ENCODE measurements at regions of chr7 and their contacts with region 1.

Region 1: GRCh38 chr7:151080522-151081169 is at the start of gene FASTK:
- DNase-seq: peak; percentile 90
- ATAC-seq: peak; percentile 82
- H3K4me3 ChIP-seq: peak within 1 kb of the TSS; percentile 58 to 92 (median 89)
- H3K4me3 Mint-ChIP-seq: peak within 1 kb of the TSS; percentile 87
- H3K27ac ChIP-seq: peak within 1 kb of the TSS; percentile 68 to 92
- H3K27ac Mint-ChIP-seq: peak within 1 kb of the TSS; percentile 88
- H3K4me1 ChIP-seq: peaks cover 42 to 52% of the 10 kb centered on the region in 2 donors
- H3K4me1 Mint-ChIP-seq: peaks cover 52% of the 10 kb centered on the region
- H3K27me3 ChIP-seq: peaks cover 0 to 20% (median 8%) of the 10 kb centered on the region in 4 experiments
- H3K27me3 Mint-ChIP-seq: peaks cover 11% of the 10 kb centered on the region
- CTCF ChIP-seq: no peak
- total RNA-seq, gene FASTK: 119 and 120 TPM in 2 replicates

Region 2: GRCh38 chr7:149771721-149772240 is 1308.9 kb before region 1 on chr7:
- CTCF ChIA-PET with region 1: no interaction called
- POLR2A ChIA-PET with region 1: no interaction called
- intact Hi-C with region 1: loop called (anchors 5 kb)
- DNase-seq: peak; percentile 89
- ATAC-seq: peak; percentile 97
- H3K4me3 ChIP-seq: peak overlapping the region in 4 of 5 experiments; percentile 53 to 74 (median 64)
- H3K4me3 Mint-ChIP-seq: peak overlapping the region; percentile 78
- H3K27ac ChIP-seq: no peak overlapping the region
- H3K27ac Mint-ChIP-seq: no peak overlapping the region
- H3K4me1 ChIP-seq: peaks cover 7 to 19% of the 10 kb centered on the region in 2 donors
- H3K4me1 Mint-ChIP-seq: peaks cover 9% of the 10 kb centered on the region
- H3K27me3 ChIP-seq: peaks cover 0 to 19% (median 1%) of the 10 kb centered on the region in 4 experiments
- H3K27me3 Mint-ChIP-seq: peaks cover 10% of the 10 kb centered on the region
- CTCF ChIP-seq: no peak

Region 3: DNA sequence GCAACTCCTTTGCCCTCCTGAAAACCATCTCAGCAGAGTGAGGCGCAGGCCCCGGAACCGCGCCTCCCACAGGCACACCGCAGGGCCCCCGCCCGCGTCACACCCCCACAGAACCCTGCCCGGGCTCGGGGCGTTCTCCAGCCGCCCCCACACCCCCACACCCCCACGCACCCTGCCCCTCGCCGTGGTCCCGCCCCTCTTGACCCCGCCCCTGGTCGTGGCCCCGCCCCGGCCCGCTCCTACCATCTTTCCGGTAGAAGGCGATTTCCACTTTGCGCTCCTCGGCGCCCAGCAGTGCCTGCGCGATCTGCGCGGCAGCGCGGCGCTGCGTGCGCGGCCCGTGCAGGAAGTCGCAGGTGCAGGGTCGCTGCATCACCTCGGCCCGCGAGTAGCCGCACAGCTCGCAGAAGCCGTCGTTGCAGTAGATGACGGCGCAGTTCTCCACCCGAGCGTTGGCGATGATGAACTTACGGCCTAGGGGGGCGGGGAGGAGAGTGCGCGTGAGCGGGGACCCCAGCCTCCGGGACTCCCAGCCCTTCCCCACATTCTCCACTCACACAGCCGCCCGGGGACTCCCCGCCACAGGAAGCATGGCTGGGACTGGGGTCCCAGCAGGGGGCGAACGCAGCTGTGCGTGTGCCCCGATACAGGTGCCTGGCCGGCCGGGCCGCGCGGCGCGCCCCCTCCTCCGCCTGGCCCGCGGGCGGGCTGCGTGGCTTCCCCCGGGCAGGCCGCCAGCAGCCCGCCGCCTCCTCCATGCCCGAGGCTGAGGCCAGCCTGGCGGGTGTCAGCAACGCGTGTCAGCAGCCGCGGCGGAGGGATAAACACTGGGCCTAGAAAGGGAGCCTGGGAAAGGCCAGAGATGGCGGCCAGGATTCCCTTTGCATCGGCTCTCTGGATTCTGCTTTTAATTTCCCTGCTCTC is 105.9 kb before region 1 on chr7:
- CTCF ChIA-PET with region 1: no interaction called
- POLR2A ChIA-PET with region 1: no interaction called
- intact Hi-C with region 1: loop called (anchors 5 kb)
- DNase-seq: peak; percentile 81
- ATAC-seq: peak; percentile 71
- H3K4me3 ChIP-seq: peak overlapping the region; percentile 21 to 74 (median 60)
- H3K4me3 Mint-ChIP-seq: peak overlapping the region; percentile 94
- H3K27ac ChIP-seq: peak overlapping the region in 1 of 2 donors; percentile 64
- H3K27ac Mint-ChIP-seq: peak overlapping the region; percentile 87
- H3K4me1 ChIP-seq: peaks cover 37 to 42% of the 10 kb centered on the region in 2 donors
- H3K4me1 Mint-ChIP-seq: peaks cover 43% of the 10 kb centered on the region
- H3K27me3 ChIP-seq: peaks cover 0 to 41% (median 28%) of the 10 kb centered on the region in 4 experiments
- H3K27me3 Mint-ChIP-seq: peaks cover 19% of the 10 kb centered on the region
- CTCF ChIP-seq: peak; percentile 33

Region 4: DNA sequence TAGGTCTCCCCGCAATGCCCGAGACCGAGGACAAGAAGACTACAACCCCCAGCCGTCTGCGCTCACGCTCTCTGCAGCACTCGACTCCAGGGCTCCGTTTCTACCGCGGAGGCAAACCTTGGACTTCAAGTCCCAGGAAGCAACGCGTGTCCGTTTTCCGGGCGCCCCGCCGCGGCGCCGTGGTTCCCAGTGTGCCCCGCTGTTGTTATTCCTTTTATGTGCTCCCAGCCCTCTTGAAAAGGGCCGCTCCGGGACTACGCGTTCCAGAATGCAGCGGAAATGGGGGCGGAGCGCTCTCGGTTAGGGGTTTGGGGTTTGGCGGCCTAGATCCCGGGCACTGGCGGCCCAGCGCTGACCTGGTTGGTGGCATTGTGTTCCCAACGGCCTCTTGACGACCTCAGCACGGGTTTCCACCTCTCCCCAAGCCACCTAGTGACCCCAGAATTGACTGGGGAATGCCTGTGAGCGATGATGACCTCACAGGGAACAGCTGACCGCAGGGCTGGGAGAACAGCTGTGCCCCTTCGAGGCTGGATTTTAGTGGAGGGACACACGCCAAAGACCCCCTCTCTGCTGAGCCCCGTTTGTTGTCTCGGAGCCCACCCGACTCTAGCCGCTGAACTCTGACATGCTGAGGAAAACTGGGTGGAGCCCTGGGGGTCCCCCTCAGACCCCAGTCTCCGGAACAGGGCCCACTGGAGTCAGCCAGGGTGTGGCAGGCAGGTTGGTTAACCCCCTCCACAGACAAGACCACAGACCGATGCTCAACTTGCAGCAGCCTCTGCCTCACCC is 22.5 kb before region 1 on chr7:
- CTCF ChIA-PET with region 1: interaction called, 6 read pairs
- POLR2A ChIA-PET with region 1: interaction called, 3 read pairs
- intact Hi-C with region 1: loop called (anchors 1 kb)
- DNase-seq: peak; percentile 98
- ATAC-seq: peak; percentile 92
- H3K4me3 ChIP-seq: peak overlapping the region; percentile 67 to 90 (median 73)
- H3K4me3 Mint-ChIP-seq: peak overlapping the region; percentile 96
- H3K27ac ChIP-seq: peak overlapping the region; percentile 79 to 82
- H3K27ac Mint-ChIP-seq: peak overlapping the region; percentile 94
- H3K4me1 ChIP-seq: peaks cover 23 to 40% of the 10 kb centered on the region in 2 donors
- H3K4me1 Mint-ChIP-seq: peaks cover 36% of the 10 kb centered on the region
- H3K27me3 ChIP-seq: no peaks in the 10 kb centered on the region
- H3K27me3 Mint-ChIP-seq: no peaks in the 10 kb centered on the region
- CTCF ChIP-seq: no peak

Region 5: DNA sequence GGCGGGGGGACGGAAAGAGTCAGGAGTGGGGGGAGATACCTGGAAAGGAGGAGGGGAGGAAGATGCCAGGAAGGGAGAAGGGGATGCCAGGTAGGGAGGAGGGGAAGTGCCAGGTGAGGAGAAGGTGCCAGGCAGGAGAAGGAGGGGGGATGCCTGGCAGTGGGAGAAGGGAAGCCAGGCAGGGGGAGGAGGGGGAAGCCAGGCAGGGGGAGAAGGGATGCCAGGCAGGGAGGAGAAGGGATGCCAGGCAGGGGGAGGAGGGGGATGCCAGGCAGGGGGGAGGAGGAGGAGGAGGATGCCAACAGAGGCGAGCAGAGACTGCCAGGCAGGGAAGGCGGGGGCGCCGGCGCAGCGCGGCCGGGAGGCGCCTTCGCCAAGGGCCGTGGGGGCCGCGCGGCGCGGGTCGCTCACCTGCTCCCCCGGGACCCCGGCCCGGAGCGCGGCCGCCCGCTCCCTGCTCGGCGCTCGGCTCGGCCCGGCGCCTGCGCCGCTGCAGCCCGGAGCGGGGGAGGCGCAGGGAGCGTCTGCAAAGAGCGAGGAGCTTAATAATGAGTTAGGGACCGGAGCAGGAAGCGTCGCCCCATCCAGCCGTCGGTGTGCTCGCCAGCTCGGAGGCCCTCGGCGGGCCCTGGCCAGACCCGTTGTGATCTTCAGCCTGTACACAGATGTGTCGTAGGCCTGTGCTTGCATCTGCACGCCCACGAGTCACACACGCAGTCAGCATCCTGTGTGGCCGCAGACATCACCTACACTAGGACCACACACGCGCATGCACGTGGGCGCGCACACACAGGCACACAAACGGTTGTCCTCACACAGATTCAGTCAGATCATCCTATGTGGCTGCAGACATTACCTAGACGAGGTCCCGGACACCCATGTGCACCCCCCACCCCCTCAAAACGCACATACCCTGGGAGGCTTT is 196.3 kb after region 1 on chr7:
- CTCF ChIA-PET with region 1: no interaction called
- POLR2A ChIA-PET with region 1: no interaction called
- intact Hi-C with region 1: no loop called
- DNase-seq: peak; percentile 60
- ATAC-seq: peak; percentile 64
- H3K4me3 ChIP-seq: peak overlapping the region in 4 of 5 experiments; percentile 11 to 50 (median 44)
- H3K4me3 Mint-ChIP-seq: peak overlapping the region; percentile 82
- H3K27ac ChIP-seq: no peak overlapping the region
- H3K27ac Mint-ChIP-seq: no peak overlapping the region
- H3K4me1 ChIP-seq: peaks cover 4 to 11% of the 10 kb centered on the region in 2 donors
- H3K4me1 Mint-ChIP-seq: peaks cover 10% of the 10 kb centered on the region
- H3K27me3 ChIP-seq: peaks cover 0 to 39% (median 6%) of the 10 kb centered on the region in 4 experiments
- H3K27me3 Mint-ChIP-seq: peaks cover 55% of the 10 kb centered on the region
- CTCF ChIP-seq: no peak

Region 6: GRCh38 chr7:151341357-151342101 is 260.9 kb after region 1 on chr7 and contains the start of gene NUB1:
- CTCF ChIA-PET with region 1: no interaction called
- POLR2A ChIA-PET with region 1: no interaction called
- intact Hi-C with region 1: loop called (anchors 5 kb)
- DNase-seq: peak; percentile 93
- ATAC-seq: peak; percentile 95
- H3K4me3 ChIP-seq: peak within 1 kb of the TSS; percentile 62 to 100 (median 84)
- H3K4me3 Mint-ChIP-seq: peak within 1 kb of the TSS; percentile 88
- H3K27ac ChIP-seq: peak within 1 kb of the TSS; percentile 79 to 80
- H3K27ac Mint-ChIP-seq: peak within 1 kb of the TSS; percentile 95
- H3K4me1 ChIP-seq: peaks cover 29 to 36% of the 10 kb centered on the region in 2 donors
- H3K4me1 Mint-ChIP-seq: peaks cover 36% of the 10 kb centered on the region
- H3K27me3 ChIP-seq: no peaks in the 10 kb centered on the region
- H3K27me3 Mint-ChIP-seq: no peaks in the 10 kb centered on the region
- CTCF ChIP-seq: no peak
- total RNA-seq, gene NUB1: 95.4 and 104 TPM in 2 replicates

Measured in B cell (primary cell).